ENCODE measurements at regions of chr19 and their contacts with region 1.

Region 1: DNA sequence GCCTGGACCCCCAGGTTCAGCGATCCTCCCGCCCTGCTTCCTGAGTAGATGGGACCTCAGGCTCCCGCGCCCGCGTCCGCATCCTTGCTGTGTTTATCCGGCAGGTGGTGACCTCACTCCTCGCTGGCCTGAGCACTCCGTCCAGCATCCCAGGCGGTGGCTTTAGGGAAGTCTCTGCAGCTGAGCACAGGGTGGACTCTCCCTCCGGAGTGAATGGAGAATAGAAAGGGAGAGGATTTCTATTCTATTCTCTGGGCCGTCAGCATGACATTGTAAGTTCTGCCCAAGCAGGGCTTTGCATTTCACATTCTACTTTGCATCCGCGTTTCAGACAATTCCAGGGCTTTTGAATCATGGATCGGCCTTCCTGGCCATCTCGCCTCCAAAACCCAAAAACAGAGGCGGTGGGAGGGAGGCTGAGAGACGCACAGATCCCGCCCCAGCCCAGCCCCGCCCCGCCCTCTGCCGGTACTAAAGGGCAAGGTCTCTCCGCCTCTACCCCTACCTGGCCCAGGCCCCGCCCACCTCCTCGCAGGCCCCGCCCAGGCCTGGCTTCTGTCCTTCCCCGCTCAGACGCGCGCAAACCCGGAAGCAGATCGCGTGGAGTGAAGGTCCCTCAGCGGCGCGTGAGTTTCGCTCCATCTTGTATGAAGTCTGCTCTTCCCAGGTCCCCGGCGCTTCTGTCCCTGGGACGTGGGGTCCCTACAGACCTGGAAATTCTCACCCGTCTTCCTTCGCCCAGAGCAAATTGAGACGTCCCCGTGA is at the start of gene ZNF525:
- DNase-seq: peak in 1 of 2 experiments; percentile 97
- H3K4me3 ChIP-seq: peak within 1 kb of the TSS; percentile 84 to 98 (median 89)
- H3K27ac ChIP-seq: peak within 1 kb of the TSS; percentile 53; the same call in 1 of the 2 replicates
- H3K4me1 ChIP-seq: peaks cover 0 to 3% (median under 1%) of the 10 kb centered on the region in 4 experiments; a peak in 3 of 7 replicates
- H3K27me3 ChIP-seq: no peaks in the 10 kb centered on the region
- CTCF ChIP-seq: peak; percentile 28 to 48 (median 32)
- EP300 ChIP-seq: no peak
- POLR2A ChIP-seq: peak in 1 of 2 experiments; percentile 47; a peak in 1 of 3 replicates
- RAD21 ChIP-seq: peak; percentile 34 to 51; a peak in 3 of 4 replicates
- total RNA-seq, gene ZNF525: 58.0 and 63.4 TPM in 2 replicates

Region 2: DNA sequence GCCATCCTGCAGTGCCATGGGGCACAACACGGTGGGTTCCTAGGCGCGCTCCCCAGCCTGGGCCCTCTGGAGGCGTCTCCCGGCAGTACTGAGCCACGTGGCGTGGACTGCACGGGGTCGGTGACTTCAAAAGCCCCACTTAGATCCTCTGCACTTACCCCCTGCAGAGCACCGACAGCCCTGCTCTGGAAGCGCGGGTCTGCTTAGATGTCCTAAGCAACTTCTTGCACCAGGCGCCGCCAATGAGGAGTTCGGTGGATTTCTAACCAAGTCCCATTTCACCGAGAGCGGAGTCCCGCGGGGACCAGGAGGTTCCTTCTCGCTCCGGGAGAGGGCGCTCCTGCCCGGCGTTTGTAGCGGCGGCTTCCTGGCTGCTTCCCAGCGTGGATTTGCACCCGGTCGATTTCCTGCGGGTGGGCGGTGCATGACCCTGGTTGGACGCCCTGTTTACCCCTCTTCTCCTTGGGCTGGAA is 56.9 kb before region 1 on chr19:
- CTCF ChIA-PET with region 1: interaction called, 13 read pairs
- POLR2A ChIA-PET with region 1: no interaction called
- DNase-seq: peak; percentile 56 to 94
- H3K4me3 ChIP-seq: peak overlapping the region; percentile 0 to 48 (median 20); a peak in 5 of 8 replicates
- H3K27ac ChIP-seq: no peak overlapping the region
- H3K4me1 ChIP-seq: no peaks in the 10 kb centered on the region
- H3K27me3 ChIP-seq: no peaks in the 10 kb centered on the region; a peak in 1 of 7 replicates
- CTCF ChIP-seq: peak; percentile 85 to 97 (median 92)
- EP300 ChIP-seq: 0 out of 3 replicates have a peak, but pooled peaks of 1 of the 2 experiments have one; percentile 23
- POLR2A ChIP-seq: no peak
- RAD21 ChIP-seq: peak; percentile 80 to 89